Head of caudate nucleus (tissue), 42 donors: ENCODE measurements at regions of chr14 and their contacts with region 1.

Region 1: DNA sequence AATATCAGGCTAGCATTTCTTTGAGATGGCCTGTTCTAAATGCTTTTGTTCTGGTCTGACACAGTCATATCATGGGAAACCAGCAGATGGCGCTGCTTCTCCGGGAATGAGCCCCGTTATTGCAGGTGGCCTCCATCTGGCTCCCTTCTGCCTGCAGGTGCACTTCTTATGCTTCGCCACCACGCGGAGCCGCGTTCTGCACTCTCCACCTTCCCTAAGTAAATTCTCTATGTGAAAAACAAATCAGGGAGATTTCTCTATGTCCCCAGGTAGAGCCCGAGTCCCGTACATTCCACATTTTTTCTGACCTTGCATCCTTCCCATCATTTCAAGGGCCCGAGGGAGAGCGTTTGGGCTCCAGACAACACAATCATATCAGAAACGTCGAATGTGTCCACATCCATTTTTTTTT is 26.2 kb downstream of the GLRX5 start:
- DNase-seq: peak; percentile 80 to 96 (median 91)

Region 2: DNA sequence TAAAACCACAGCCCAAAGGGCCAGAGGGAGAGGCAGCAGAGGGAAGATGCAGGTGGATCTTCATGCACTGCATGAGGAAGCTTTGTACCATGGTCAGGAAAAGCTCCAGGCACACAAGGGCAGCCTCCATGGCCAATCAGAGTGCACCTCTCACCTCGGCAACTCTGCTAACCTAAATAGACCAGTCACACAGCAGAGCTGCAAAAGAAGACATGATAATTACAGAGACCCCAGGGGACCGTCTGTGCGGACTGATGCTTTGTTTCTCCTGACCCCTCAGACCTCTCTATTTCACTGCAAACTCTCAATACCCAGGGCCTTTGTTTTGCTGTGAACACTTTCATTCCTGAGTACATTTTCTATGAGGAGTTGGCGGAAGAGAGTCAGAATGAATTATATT is 114.5 kb after region 1 on chr14:
- intact Hi-C with region 1: no loop called
- DNase-seq: peak in 1 of 42 donors; percentile 4

Region 3: GRCh38 chr14:95774265-95775160 is 213.5 kb after region 1 on chr14:
- intact Hi-C with region 1: loop called (anchors 5 kb)
- DNase-seq: peak in 38 of 42 donors; percentile 15 to 86 (median 61)

Region 4: GRCh38 chr14:95993768-95994592 is 433.0 kb after region 1 on chr14:
- intact Hi-C with region 1: loop called (anchors 2 kb)
- DNase-seq: peak in 30 of 42 donors; percentile 11 to 85 (median 50)

Region 5: DNA sequence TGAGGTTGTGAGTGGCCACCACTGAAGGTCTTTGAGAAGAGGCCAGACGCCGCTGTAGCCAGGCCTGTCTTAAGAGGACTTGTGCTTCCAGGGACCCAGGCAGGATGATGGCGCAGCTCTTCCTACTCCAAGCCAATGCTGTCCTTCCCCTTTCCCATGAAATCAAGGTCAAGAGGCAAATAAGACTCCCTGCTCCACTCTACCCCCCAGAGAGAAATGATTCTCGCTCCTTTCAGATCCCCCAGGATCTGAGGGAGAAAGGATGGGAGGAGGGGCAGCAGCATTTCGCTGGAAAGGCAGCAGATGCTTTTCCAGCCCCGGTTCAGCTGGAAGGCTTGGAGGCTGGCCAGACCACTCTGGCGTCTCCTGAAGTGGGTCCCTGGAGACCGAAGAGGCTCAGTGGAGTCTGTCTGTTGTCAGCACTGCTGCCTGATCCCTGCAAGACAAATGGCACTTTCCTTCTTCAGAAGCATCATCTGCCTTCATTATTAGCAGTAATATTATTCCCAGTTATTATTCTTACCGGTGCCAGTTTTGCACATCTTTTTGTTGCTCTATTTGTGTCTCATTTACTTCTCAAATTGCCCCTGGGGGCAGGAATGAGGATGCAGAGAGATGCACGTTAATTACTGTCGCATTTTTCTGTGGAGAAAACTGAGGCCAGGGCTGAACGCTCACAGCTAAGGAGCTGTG is 529.6 kb after region 1 on chr14:
- intact Hi-C with region 1: loop called (anchors 5 kb)
- DNase-seq: peak; percentile 23 to 86 (median 63)